Mammary epithelial cell (primary cell): ENCODE measurements at regions of chr3 and their contacts with region 1.

Region 1: DNA sequence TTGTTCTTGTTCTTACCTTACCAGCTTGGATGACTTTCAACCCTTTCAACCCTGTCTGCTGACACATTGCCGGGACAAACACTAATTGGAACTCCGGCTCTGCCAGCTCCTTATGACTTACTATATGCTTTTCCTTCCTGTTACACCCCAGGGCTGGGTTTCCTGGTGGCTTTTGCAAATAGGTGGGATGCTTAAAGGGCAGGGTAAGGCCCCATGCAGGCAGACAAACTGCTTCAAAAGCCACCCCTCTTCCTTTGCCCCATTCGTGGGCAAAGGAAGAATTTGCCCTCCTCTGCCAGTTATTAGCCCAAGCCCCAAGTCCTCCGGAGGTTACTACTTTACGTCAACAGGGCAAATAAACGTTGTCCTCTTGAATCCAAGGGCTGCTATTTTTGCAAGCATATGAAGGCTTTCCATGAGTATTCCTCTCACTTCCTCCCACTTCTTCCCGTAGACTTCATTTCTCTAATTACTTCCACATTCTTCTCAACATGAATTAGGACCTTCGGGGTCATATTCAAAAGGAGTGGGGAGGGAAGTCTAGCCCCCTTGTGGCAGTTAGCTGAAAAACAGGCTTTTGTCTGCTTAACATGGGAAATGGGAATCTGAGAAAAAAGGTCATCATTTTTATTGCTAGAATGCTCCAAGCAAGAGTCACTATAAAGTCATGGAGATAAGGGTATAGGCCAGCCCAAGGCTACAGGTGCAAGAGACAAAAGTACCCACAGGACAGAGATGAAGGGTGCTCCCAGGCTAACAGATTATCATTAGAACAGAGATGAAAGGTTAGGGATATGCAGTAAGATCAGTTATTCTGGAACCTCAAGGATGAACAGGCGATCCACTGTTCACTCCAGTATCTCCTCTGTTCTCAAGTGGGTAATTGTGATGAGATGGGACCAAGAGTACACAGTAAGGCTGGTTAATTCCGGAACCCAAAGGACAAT is 56.3 kb upstream of the FSTL1 start:
- DNase-seq: no peak
- H3K4me3 ChIP-seq: no peak overlapping the region
- H3K27ac ChIP-seq: no peak overlapping the region
- H3K4me1 ChIP-seq: no peaks in the 10 kb centered on the region
- H3K27me3 ChIP-seq: no peaks in the 10 kb centered on the region
- CTCF ChIP-seq: peak; percentile 67 to 80

Region 2: GRCh38 chr3:120245386-120245785 is 261.7 kb before region 1 on chr3:
- CTCF ChIA-PET with region 1: no interaction called
- dilution Hi-C with region 1: no loop called
- in situ Hi-C with region 1: no loop called
- intact Hi-C with region 1: loop called (anchors 2 kb)
- DNase-seq: no peak
- H3K4me3 ChIP-seq: no peak overlapping the region
- H3K27ac ChIP-seq: no peak overlapping the region
- H3K4me1 ChIP-seq: no peaks in the 10 kb centered on the region
- H3K27me3 ChIP-seq: no peaks in the 10 kb centered on the region
- CTCF ChIP-seq: no peak

Region 3: DNA sequence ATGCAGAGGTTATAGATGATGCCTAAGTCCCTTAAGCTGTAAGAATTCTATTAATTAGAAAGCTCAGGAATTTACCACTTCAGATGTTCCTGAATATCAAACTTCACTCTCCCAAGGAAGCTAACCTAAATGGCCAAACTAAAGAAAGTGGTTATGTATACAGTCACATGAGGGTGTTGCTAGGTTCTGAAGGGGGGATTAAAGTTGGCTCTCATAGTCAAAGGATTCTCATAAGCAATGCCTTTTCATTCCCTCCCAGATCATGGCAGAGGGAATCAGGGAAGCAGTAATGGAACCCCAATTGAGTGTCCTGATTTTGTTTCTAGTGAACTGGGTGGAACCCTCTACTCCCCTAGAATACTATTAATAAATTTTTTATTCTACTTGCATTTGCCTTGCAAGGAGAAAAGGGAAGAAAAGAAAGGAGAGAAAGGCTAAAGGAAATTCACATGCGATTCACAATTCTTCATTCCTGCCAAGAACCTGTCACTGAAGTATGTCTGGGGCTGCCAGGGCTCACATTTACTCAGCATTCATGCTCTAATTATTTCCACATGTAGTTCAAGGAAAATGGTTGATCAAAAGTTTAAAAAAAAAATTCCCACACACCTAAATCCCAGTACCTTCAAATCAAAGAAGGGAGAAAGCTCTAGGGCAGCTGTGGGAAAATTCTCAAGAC is 81.4 kb before region 1 on chr3:
- CTCF ChIA-PET with region 1: no interaction called
- dilution Hi-C with region 1: loop called (anchors 5 kb)
- in situ Hi-C with region 1: no loop called
- intact Hi-C with region 1: no loop called
- DNase-seq: no peak
- H3K4me3 ChIP-seq: no peak overlapping the region
- H3K27ac ChIP-seq: no peak overlapping the region
- H3K4me1 ChIP-seq: no peaks in the 10 kb centered on the region
- H3K27me3 ChIP-seq: no peaks in the 10 kb centered on the region
- CTCF ChIP-seq: no peak

Region 4: GRCh38 chr3:120450600-120451271 is 56.4 kb before region 1 on chr3 and contains the start of gene FSTL1:
- CTCF ChIA-PET with region 1: no interaction called
- dilution Hi-C with region 1: no loop called
- in situ Hi-C with region 1: no loop called
- intact Hi-C with region 1: loop called (anchors 1 kb)
- DNase-seq: peak; percentile 45
- H3K4me3 ChIP-seq: peak within 1 kb of the TSS; percentile 81 to 97 (median 81)
- H3K27ac ChIP-seq: peak within 1 kb of the TSS; percentile 63
- H3K4me1 ChIP-seq: peaks cover 19% of the 10 kb centered on the region
- H3K27me3 ChIP-seq: no peaks in the 10 kb centered on the region
- CTCF ChIP-seq: no peak
- total RNA-seq, gene FSTL1: 109 to 161 TPM

Region 5: DNA sequence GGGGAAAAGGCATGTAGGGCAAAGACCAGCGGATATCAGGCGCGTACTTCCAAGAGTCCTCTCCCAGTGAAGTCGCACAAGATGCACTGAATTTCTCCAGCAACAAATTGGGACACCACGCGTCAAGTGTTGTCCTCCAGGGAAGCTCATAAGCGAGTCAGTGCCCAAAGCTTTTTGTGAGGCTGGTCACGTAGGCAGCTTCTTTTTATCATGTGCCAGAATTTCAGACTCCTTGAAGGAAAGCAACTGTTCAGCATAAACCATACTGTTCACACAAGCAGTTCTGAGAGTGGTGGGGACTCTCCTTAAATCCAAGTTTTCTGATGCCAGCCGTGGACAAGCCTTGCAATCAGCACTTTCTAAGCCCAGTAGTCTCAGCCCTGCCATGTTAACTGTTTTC is 46.2 kb before region 1 on chr3:
- CTCF ChIA-PET with region 1: no interaction called
- dilution Hi-C with region 1: loop called (anchors 5 kb)
- in situ Hi-C with region 1: no loop called
- intact Hi-C with region 1: no loop called
- DNase-seq: no peak
- H3K4me3 ChIP-seq: no peak overlapping the region
- H3K27ac ChIP-seq: no peak overlapping the region
- H3K4me1 ChIP-seq: no peaks in the 10 kb centered on the region
- H3K27me3 ChIP-seq: no peaks in the 10 kb centered on the region
- CTCF ChIP-seq: no peak

Region 6: DNA sequence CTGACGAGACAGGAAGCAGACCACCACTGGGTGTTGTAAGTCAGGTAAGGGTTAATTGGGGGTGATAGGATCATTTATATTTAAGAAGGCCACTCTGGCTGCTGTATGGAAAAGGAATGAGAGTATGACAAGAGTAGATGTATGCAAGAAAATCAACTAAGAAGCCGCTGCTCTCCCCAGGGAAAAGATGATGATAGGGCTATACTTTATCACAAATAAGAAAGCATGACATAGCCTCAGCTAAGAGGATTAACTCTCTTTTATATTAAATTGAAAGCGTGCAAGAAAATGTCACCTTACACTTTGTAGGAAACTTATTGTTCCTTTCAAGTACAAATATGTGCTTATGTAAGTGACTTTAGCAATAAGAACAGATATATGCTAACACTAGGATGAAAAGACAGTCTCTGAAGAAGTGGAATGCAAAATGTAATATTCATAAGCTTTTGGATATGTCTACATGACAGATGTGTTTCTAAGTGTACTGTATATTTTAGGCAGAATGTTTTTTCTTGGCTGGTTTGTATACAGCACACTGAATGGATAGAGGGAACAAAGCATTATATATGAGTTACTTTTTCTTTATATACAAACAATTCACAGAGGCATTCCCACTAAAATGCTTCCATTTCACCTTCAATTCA is 80.4 kb after region 1 on chr3:
- CTCF ChIA-PET with region 1: no interaction called
- dilution Hi-C with region 1: loop called (anchors 5 kb)
- in situ Hi-C with region 1: no loop called
- intact Hi-C with region 1: no loop called
- DNase-seq: no peak
- H3K4me3 ChIP-seq: no peak overlapping the region
- H3K27ac ChIP-seq: no peak overlapping the region
- H3K4me1 ChIP-seq: no peaks in the 10 kb centered on the region
- H3K27me3 ChIP-seq: no peaks in the 10 kb centered on the region
- CTCF ChIP-seq: no peak

Region 7: GRCh38 chr3:120637851-120638559 is 130.9 kb after region 1 on chr3:
- CTCF ChIA-PET with region 1: no interaction called
- dilution Hi-C with region 1: no loop called
- in situ Hi-C with region 1: no loop called
- intact Hi-C with region 1: no loop called
- DNase-seq: no peak
- H3K4me3 ChIP-seq: no peak overlapping the region
- H3K27ac ChIP-seq: no peak overlapping the region
- H3K4me1 ChIP-seq: no peaks in the 10 kb centered on the region
- H3K27me3 ChIP-seq: peaks cover 2% of the 10 kb centered on the region
- CTCF ChIP-seq: no peak

Region 8: DNA sequence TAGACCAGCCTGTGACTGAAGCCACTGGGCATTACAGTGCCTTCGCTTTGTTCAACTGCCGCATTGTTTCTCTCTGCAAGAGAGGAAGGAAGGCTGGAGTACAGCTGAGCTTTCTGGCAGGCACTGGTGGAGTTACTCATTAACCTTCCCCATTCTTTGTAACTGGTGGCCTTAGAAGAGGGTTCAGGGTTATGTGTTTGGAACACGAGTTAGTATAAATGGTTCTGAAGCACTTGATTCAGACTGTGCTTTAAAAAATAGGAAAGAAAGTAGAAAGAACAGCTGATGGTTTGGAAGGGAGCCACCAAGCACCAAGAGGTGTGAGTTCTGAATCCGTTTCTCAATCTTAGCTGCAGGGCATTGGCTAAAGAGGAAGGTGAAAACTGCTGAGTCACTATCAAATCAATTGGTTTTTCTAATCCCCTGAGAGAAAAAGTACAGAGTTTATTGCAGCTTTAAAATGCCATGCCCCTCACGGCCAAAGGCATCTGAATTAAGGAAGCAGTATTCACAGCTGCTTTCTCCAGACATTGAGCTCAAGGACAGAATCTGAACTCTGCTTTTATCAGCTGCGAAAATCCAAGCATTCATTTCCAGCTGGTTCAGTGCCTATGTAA is 171.3 kb after region 1 on chr3:
- CTCF ChIA-PET with region 1: no interaction called
- dilution Hi-C with region 1: no loop called
- in situ Hi-C with region 1: no loop called
- intact Hi-C with region 1: no loop called
- DNase-seq: peak; percentile 68
- H3K4me3 ChIP-seq: no peak overlapping the region
- H3K27ac ChIP-seq: no peak overlapping the region
- H3K4me1 ChIP-seq: peaks cover 10% of the 10 kb centered on the region
- H3K27me3 ChIP-seq: no peaks in the 10 kb centered on the region
- CTCF ChIP-seq: no peak

Region 9: GRCh38 chr3:120780977-120781376 is 273.9 kb after region 1 on chr3:
- CTCF ChIA-PET with region 1: no interaction called
- dilution Hi-C with region 1: no loop called
- in situ Hi-C with region 1: no loop called
- intact Hi-C with region 1: no loop called
- DNase-seq: no peak
- H3K4me3 ChIP-seq: no peak overlapping the region
- H3K27ac ChIP-seq: no peak overlapping the region
- H3K4me1 ChIP-seq: no peaks in the 10 kb centered on the region
- H3K27me3 ChIP-seq: no peaks in the 10 kb centered on the region
- CTCF ChIP-seq: no peak

Region 10: DNA sequence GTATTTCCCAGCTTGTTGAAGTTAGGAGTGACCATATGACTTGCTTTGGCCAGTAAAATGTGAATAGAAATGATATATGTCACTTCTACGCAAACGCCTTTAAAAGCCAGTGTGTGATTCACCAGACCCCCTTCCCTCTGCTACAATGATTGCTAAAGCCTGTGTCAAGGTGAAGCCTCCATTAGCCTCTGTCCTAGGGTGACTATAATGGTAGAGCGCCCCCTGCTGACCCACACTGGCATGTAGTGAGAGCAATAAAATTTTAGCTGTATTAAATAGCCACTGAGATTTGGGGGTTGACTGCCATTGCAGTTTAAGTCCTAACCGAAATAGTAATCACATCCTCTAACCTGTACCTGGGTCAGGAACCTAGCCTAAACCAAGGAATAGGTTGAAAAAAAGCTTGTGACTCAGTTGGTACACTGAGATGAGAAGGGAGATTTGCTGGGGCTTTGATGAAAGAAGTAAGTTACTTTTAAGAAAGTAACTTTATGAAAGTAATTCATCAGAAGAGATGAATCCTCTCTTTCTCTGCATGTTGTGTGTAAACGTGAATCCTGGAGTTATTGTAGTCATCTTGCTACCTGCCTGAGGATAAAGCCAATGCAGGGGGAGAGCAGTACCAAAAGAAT is 288.0 kb after region 1 on chr3:
- CTCF ChIA-PET with region 1: no interaction called
- dilution Hi-C with region 1: no loop called
- in situ Hi-C with region 1: no loop called
- intact Hi-C with region 1: no loop called
- DNase-seq: peak; percentile 50
- H3K4me3 ChIP-seq: no peak overlapping the region
- H3K27ac ChIP-seq: no peak overlapping the region
- H3K4me1 ChIP-seq: peaks cover 5% of the 10 kb centered on the region
- H3K27me3 ChIP-seq: peaks cover 4% of the 10 kb centered on the region
- CTCF ChIP-seq: peak; percentile 87